ENCODE measurements at regions of chr19 and their contacts with region 1.

Region 1: DNA sequence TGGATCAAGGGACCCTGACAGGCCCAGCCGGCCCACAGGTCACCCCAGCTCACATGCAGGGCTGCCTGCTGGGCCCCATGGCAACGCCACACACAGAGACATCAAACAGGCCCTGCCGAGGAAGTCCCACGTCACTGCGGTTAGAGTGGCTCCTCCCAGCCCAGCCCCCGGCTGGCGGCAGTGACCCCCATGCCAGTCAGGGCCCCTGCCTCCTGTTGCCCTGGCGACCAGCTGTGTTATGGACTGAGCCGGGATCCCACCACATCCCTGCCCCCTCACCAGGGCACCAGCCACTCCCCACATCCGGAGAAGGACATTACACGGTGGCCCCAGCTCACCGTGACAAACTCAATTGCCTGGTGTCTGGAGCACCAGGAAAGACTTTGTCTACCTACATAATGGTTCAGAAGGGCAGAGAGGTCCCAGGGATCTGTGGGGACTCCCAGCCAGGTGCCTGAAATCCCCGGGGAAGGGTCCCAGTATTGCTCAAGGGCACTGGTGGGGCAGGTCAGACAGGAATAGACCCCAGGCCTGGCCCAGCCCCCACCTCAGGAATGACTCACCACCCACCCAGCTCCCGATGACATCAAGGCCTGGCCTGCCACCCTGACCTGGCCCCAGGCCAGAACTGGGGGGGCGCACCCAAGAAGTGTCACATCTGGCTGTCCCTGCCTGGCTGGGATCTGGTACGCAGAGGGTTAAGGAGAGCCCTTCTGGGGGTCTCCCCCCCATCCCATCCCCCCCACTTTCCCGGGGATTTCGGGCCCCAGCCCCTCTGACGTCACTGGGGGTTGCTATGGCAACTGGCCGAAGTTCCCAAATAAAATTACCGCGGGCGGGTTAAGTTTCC is 30.2 kb upstream of the NANOS3 start:
- DNase-seq: peak; percentile 97
- H3K4me3 Mint-ChIP-seq: peak overlapping the region; percentile 72
- H3K27ac Mint-ChIP-seq: peak overlapping the region; percentile 98
- H3K4me1 Mint-ChIP-seq: peaks cover 52% of the 10 kb centered on the region
- H3K27me3 Mint-ChIP-seq: no peaks in the 10 kb centered on the region

Region 2: GRCh38 chr19:13155472-13156359 is 691.1 kb before region 1 on chr19:
- CTCF ChIA-PET with region 1: no interaction called
- intact Hi-C with region 1: loop called (anchors 2 kb)
- DNase-seq: peak; percentile 86
- H3K4me3 Mint-ChIP-seq: peak overlapping the region; percentile 99
- H3K27ac Mint-ChIP-seq: peak overlapping the region; percentile 100
- H3K4me1 Mint-ChIP-seq: peaks cover 40% of the 10 kb centered on the region
- H3K27me3 Mint-ChIP-seq: no peaks in the 10 kb centered on the region

Region 3: GRCh38 chr19:13610039-13610691 is 236.6 kb before region 1 on chr19:
- CTCF ChIA-PET with region 1: no interaction called
- intact Hi-C with region 1: no loop called
- DNase-seq: peak; percentile 27
- H3K4me3 Mint-ChIP-seq: no peak overlapping the region
- H3K27ac Mint-ChIP-seq: no peak overlapping the region
- H3K4me1 Mint-ChIP-seq: peaks cover 2% of the 10 kb centered on the region
- H3K27me3 Mint-ChIP-seq: peaks cover 4% of the 10 kb centered on the region

Region 4: GRCh38 chr19:13774217-13775191 is 72.3 kb before region 1 on chr19 and contains the start of gene C19orf53:
- CTCF ChIA-PET with region 1: no interaction called
- intact Hi-C with region 1: loop called (anchors 1 kb)
- DNase-seq: peak; percentile 92
- H3K4me3 Mint-ChIP-seq: peak within 1 kb of the TSS; percentile 98
- H3K27ac Mint-ChIP-seq: peak within 1 kb of the TSS; percentile 94
- H3K4me1 Mint-ChIP-seq: peaks cover 19% of the 10 kb centered on the region
- H3K27me3 Mint-ChIP-seq: no peaks in the 10 kb centered on the region
- total RNA-seq, gene C19orf53: 116 to 132 TPM

Region 5: GRCh38 chr19:13794757-13795589 is 51.8 kb before region 1 on chr19 and contains the start of gene ZSWIM4:
- CTCF ChIA-PET with region 1: no interaction called
- intact Hi-C with region 1: loop called (anchors 1 kb)
- DNase-seq: peak; percentile 98
- H3K4me3 Mint-ChIP-seq: peak within 1 kb of the TSS; percentile 95
- H3K27ac Mint-ChIP-seq: peak within 1 kb of the TSS; percentile 86
- H3K4me1 Mint-ChIP-seq: peaks cover 29% of the 10 kb centered on the region
- H3K27me3 Mint-ChIP-seq: no peaks in the 10 kb centered on the region
- total RNA-seq, gene ZSWIM4: 6.7 to 7.1 TPM

Region 6: GRCh38 chr19:13861732-13862531 is 15.2 kb after region 1 on chr19:
- CTCF ChIA-PET with region 1: interaction called, 23 read pairs
- intact Hi-C with region 1: loop called (anchors 1 kb)
- DNase-seq: peak; percentile 93
- H3K4me3 Mint-ChIP-seq: peak overlapping the region; percentile 96
- H3K27ac Mint-ChIP-seq: peak overlapping the region; percentile 99
- H3K4me1 Mint-ChIP-seq: peaks cover 29% of the 10 kb centered on the region
- H3K27me3 Mint-ChIP-seq: peaks cover 28% of the 10 kb centered on the region

Region 7: GRCh38 chr19:14383661-14384555 is 537.1 kb after region 1 on chr19:
- CTCF ChIA-PET with region 1: no interaction called
- intact Hi-C with region 1: loop called (anchors 5 kb)
- DNase-seq: peak; percentile 79
- H3K4me3 Mint-ChIP-seq: peak overlapping the region; percentile 97
- H3K27ac Mint-ChIP-seq: peak overlapping the region; percentile 100
- H3K4me1 Mint-ChIP-seq: peaks cover 36% of the 10 kb centered on the region
- H3K27me3 Mint-ChIP-seq: no peaks in the 10 kb centered on the region

Region 8: DNA sequence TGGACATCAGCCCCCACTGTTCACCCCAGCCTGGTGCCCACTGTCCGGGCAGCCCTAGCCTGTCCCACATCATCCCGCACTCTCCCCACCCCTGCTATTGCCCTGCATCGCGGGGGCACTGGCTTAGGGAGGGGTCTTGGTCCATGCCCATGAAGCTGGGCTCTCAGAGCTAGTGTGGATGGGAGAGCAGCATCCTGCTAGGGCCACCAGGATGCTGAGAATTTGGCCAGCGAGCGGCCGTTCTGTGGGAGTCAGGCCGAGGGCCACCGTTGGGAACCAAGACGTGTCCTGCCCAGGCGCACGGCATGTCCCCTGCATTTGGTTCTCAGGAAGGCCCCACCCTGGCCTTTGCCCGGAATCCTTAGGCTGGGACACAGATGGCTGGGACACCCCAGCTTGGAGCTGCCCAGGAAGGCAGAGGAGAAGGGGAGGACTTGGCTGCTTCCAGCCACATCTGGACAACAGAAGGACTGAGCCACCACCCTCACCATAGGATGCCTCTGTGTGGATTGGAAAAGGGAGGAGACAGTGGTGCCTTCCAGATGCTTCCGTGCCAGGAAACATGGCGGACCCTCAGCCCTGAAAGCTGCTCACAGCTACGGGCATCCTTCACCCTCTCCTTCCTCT is 549.0 kb after region 1 on chr19:
- CTCF ChIA-PET with region 1: no interaction called
- intact Hi-C with region 1: no loop called
- DNase-seq: no peak
- H3K4me3 Mint-ChIP-seq: no peak overlapping the region
- H3K27ac Mint-ChIP-seq: peak overlapping the region; percentile 88
- H3K4me1 Mint-ChIP-seq: peaks cover 41% of the 10 kb centered on the region
- H3K27me3 Mint-ChIP-seq: no peaks in the 10 kb centered on the region

Measured in activated naive CD4-positive, alpha-beta T cell treated with anti-CD3 and anti-CD28 coated beads for 36 hours (primary cell).